Heart right ventricle (tissue), 16 donors: ENCODE measurements at regions of chr2 and their contacts with region 1.

Region 1: DNA sequence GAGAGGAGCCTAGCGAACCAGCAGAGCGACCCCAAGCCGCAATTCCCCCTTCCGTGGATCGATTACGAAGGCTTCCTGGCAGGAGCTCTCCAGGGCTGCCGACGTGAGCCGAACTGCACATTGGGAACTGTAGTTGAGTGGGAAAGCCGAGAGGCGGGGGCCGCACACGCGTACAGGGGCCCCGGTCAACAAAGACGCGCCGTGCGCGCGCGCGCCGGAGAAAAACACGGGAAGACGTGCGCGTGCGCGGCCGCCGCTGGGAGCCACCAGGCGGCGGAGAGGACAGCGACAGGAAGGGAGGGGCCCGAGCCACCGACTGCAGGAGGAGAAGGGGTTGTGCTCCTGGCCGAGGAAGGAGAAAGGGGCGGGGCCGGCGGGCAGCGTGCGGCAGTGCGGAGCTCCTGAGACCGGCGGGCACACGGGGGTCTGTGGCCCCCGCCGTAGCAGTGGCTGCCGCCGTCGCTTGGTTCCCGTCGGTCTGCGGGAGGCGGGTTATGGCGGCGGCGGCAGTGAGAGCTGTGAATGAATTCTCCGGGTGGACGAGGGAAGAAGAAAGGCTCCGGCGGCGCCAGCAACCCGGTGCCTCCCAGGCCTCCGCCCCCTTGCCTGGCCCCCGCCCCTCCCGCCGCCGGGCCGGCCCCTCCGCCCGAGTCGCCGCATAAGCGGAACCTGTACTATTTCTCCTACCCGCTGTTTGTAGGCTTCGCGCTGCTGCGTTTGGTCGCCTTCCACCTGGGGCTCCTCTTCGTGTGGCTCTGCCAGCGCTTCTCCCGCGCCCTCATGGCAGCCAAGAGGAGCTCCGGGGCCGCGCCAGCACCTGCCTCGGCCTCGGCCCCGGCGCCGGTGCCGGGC is at the start of gene SPAST:
- DNase-seq: peak; percentile 97 to 98
- ATAC-seq: peak; percentile 95 to 99 (median 97)
- H3K4me3 ChIP-seq: peak within 1 kb of the TSS; percentile 64 to 99 (median 87)
- H3K27ac ChIP-seq: peak within 1 kb of the TSS; percentile 79 to 96 (median 93)
- H3K4me1 ChIP-seq: peaks cover 0 to 40% (median 21%) of the 10 kb centered on the region in 9 donors
- H3K27me3 ChIP-seq: no peaks in the 10 kb centered on the region
- CTCF ChIP-seq: peak; percentile 37 to 80 (median 58)
- total RNA-seq, gene SPAST: 7.5 to 10.9 (median 9.2) TPM

Region 2: DNA sequence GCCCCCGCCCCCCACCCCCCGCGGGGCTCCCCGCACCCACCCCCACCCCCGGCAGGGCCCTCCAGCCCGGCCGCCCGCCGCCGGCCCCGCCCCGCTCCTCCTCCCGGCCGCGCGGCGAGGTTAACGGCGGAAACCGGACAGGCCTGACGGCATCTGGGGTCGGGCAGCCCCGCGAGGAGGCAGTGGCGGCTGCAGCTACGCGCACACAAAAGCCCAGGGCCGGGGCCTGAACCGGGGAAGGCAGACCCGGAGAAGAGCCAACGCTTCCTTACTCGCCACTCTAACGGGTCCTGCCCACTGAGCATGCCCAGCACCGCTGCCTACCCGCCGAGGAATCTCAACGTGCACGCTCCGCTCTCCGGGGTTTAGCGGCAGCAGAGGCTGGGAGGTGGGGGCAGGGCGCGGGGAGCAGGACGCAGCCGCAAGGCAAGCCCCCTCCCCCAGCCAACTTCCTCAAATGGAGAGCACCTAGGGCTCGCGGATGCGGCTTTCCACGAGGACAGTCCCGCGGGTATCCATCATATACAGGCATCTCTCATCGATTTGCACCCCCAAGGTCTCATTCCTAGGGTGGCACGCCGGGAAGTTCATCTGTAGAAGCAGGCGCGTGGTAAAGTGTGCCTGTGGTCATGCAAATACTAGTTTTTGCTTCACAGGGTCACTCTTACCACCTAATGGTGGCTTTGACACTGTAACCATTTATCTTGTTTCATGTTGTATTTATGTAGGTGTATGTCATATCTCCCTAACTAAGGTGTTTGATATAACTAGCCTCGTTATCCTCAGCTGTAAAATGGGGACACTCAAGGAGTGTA is 52.7 kb before region 1 on chr2 and contains the start of gene MEMO1:
- intact Hi-C with region 1: loop called in 5 of 10 experiments (anchors 2 to 10 kb)
- DNase-seq: peak; percentile 93 to 95
- ATAC-seq: peak; percentile 89 to 95 (median 94)
- H3K4me3 ChIP-seq: peak within 1 kb of the TSS; percentile 67 to 97 (median 87)
- H3K27ac ChIP-seq: peak within 1 kb of the TSS; percentile 90 to 98 (median 96)
- H3K4me1 ChIP-seq: peaks cover 0 to 45% (median 28%) of the 10 kb centered on the region in 9 donors
- H3K27me3 ChIP-seq: no peaks in the 10 kb centered on the region
- CTCF ChIP-seq: peak in 1 of 9 donors; percentile 12
- total RNA-seq, gene MEMO1: 43.6 to 67.3 (median 54.1) TPM

Region 3: GRCh38 chr2:32039447-32040219 is 23.9 kb before region 1 on chr2 and contains the start of gene DPY30:
- intact Hi-C with region 1: loop called in 2 of 10 experiments (anchors 1 to 2 kb)
- DNase-seq: peak; percentile 92 to 94
- ATAC-seq: peak; percentile 97 to 99 (median 98)
- H3K4me3 ChIP-seq: peak within 1 kb of the TSS; percentile 55 to 98 (median 86)
- H3K27ac ChIP-seq: peak within 1 kb of the TSS in 9 of 10 donors; percentile 75 to 91 (median 84)
- H3K4me1 ChIP-seq: peaks cover 0 to 17% (median 10%) of the 10 kb centered on the region in 9 donors
- H3K27me3 ChIP-seq: no peaks in the 10 kb centered on the region
- CTCF ChIP-seq: peak in 1 of 9 donors; percentile 12
- total RNA-seq, gene DPY30: 35.1 to 47.7 (median 42.9) TPM

Region 4: GRCh38 chr2:32168513-32168912 is 105.0 kb after region 1 on chr2:
- intact Hi-C with region 1: loop called in 2 of 10 experiments (anchors 1 to 10 kb)
- DNase-seq: no peak
- ATAC-seq: no peak
- H3K4me3 ChIP-seq: no peak overlapping the region
- H3K27ac ChIP-seq: no peak overlapping the region
- H3K4me1 ChIP-seq: peaks cover 0 to 26% (median 17%) of the 10 kb centered on the region in 9 donors
- H3K27me3 ChIP-seq: no peaks in the 10 kb centered on the region
- CTCF ChIP-seq: no peak

Region 5: DNA sequence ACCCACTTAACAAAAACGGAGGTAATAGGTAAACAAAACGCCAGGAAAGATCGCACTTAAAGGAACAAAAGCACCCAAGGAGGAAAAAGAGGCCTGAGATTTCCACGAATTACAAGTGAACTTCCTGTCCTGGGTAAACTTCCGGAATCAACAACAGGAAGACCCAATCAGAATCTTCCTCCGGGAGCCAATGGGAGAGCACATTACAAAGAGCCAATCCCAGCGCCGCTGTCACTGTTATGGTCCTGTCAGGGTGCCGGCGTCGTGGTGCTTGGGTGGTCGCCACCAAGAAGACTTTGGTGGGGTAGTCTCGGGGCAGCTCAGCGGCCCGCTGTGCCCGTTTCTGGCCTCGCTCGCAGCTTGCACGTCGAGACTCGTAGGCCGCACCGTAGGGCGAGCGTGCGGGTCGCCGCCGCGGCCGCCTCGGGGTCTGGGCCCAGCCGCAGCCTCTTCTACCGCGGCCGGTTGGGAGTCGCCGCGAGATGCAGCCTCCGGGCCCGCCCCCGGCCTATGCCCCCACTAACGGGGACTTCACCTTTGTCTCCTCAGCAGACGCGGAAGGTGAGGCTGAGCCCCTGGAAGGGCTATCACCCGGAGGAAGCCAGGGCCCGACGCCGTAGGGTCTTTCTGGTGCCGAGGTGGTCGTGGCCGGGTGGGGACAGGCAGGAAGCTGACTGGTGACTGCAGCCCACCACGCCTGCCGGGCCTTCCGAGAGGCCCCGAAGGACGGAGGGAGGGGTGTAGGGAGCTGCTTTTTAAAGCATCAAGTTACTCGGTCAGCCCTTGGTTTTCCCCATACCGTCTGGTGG is 214.3 kb after region 1 on chr2 and contains the start of gene YIPF4:
- intact Hi-C with region 1: loop called in 1 of 10 experiments (anchors 5 kb)
- DNase-seq: peak; percentile 86 to 90
- ATAC-seq: peak; percentile 97 to 100 (median 99)
- H3K4me3 ChIP-seq: peak within 1 kb of the TSS; percentile 70 to 99 (median 94)
- H3K27ac ChIP-seq: peak within 1 kb of the TSS; percentile 67 to 95 (median 88)
- H3K4me1 ChIP-seq: peaks cover 0 to 45% (median 30%) of the 10 kb centered on the region in 9 donors
- H3K27me3 ChIP-seq: no peaks in the 10 kb centered on the region
- CTCF ChIP-seq: no peak
- total RNA-seq, gene YIPF4: 55.6 to 94.3 (median 66.4) TPM